ENCODE measurements at regions of chr7 and their contacts with region 1.

Region 1: DNA sequence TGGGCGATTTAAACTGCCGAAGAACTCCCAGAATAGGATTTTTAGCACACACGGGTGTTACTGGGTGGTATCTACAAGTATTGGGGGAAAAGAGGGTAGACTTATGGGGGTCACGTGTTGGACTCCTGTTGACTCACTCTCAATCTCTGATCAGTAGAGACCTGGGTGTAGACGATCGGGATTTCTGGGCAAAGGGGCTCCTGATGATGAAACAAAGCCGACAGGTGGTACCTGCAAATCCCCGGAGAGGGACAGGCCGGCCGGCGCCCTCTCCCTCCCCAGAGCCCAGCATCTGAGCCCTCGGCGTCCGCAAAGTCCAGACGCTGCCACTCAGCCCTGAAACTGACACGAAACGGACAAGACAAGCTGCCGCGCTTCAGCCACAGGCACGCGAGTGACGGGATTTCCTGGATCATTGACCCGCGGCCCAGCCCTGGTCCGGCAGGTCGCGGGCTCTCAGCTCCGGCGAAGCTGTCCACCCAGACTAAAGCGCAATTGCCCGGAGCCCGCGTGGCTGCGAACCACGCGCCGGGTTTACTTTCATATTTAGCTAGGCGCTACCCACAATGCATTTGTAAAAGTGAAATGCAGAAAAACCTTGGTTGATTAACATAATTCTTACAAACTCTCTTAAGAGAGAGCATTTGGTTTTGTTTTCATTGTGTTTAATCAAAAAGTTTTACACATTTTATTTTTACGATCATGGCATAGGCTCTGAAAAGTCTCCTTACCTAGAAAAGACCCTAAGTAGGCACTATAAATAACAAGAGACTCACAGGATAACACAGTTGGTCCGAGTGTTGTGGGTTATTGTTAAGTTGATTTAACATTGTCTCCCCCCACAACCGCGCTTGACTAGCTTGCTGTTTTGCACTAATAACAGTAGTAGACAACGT is 56.9 kb upstream of the EZH2 start:
- DNase-seq: peak; percentile 68
- H3K4me3 Mint-ChIP-seq: peak overlapping the region; percentile 94
- H3K27ac Mint-ChIP-seq: peak overlapping the region; percentile 98
- H3K4me1 Mint-ChIP-seq: peaks cover 15% of the 10 kb centered on the region
- H3K27me3 Mint-ChIP-seq: no peaks in the 10 kb centered on the region

Region 2: GRCh38 chr7:148856891-148857290 is 84.1 kb before region 1 on chr7:
- CTCF ChIA-PET with region 1: interaction called, 14 read pairs
- intact Hi-C with region 1: loop called (anchors 1 kb)
- DNase-seq: peak; percentile 14
- H3K4me3 Mint-ChIP-seq: no peak overlapping the region
- H3K27ac Mint-ChIP-seq: peak overlapping the region; percentile 32
- H3K4me1 Mint-ChIP-seq: peaks cover 38% of the 10 kb centered on the region
- H3K27me3 Mint-ChIP-seq: no peaks in the 10 kb centered on the region

Region 3: DNA sequence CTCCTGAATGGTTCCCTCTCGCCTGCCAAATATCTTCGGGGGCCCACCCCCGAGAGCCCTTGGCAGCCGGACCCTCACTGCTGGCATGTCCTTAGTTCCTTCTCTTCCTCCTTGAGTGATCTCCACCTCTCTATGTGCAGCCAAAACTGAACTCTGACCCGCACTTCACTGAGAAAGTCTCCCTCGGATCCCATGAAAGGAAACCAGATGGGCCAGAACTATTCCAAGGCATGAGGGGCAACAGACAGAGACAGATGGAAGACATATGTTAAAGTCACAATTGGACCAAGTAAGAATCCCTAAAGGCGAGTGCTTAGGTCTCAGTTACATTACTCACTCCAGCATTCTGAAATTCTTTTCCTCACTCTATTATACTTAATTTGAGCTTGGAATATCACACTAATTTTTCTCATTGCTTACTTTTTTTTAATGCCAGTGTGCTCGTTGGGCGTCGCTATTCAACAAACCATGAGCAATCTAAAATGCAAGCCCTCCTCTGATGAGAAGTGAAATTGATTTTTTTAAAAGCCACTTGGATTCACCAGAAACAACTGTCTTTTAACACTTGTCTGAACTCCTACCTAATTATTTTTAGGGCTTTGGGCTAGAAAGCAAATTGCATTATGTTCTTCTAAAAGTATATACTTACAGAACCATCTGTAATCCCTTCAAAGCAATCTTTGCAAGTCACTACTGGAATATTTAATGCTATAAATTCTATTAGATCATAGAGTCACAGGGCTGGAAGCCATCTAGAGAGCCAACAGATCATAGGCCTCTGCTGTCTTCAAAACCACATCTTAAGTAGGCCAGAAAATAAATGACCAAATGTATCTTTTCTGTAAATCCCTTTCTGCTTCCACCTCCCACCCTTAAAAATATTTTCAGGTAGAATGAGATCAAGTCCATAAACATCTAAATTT is 13.6 kb before region 1 on chr7:
- CTCF ChIA-PET with region 1: interaction called, 5 read pairs
- intact Hi-C with region 1: loop called (anchors 1 kb)
- DNase-seq: no peak
- H3K4me3 Mint-ChIP-seq: peak overlapping the region; percentile 34
- H3K27ac Mint-ChIP-seq: peak overlapping the region; percentile 92
- H3K4me1 Mint-ChIP-seq: peaks cover 67% of the 10 kb centered on the region
- H3K27me3 Mint-ChIP-seq: no peaks in the 10 kb centered on the region